K562 (cell line): ENCODE measurements at regions of chr5 and their contacts with region 1.

Region 1: GRCh38 chr5:34522599-34523386 is 133.3 kb upstream of the RAI14 start:
- DNase-seq: peak; percentile 77 to 88 (median 79)
- ATAC-seq: peak; percentile 88
- H3K4me3 ChIP-seq: no peak overlapping the region
- H3K27ac ChIP-seq: no peak overlapping the region; the same call in 2 of the 3 replicates
- H3K4me1 ChIP-seq: peaks cover 14 to 35% of the 10 kb centered on the region in 2 experiments; a peak in 3 of 5 replicates
- H3K27me3 ChIP-seq: no peaks in the 10 kb centered on the region
- CTCF ChIP-seq: peak; percentile 80 to 92 (median 84)
- EP300 ChIP-seq: no peak
- POLR2A ChIP-seq: no peak
- RAD21 ChIP-seq: peak; percentile 92 to 95

Region 2: DNA sequence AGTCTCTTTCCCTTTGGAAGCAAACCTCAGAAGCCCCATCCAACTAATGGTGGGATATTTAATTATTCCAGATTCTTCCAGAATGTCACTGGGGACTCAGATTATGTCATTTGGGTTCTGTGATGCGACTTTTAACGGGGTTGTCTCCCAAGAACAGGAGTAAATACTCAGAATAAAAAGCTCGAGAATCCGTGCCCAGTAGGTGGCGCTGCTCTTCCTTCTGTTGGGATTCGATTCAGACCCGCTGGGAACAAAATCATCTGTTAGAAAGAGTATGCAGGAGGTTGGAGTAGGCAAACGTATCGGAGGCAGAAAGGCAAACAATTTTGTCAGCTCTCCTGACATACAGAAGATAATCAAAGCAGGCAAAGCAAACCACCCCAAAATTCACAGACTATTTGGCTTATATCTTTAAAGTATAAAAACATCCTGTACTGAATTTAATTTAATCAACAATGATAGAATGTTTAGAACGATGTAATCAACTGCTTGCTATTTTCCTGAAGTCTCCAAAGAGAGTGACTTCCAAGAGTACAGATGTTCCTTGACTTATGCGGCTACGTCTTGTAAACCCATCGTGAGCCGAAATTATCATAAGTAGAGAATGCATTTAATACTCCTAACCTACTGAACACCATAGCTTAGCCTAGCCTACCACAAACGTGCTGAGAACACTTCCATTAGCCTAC is 36.5 kb before region 1 on chr5:
- CTCF ChIA-PET with region 1: interaction called, 4 read pairs
- POLR2A ChIA-PET with region 1: interaction called, 4 read pairs
- in situ Hi-C with region 1: no loop called
- intact Hi-C with region 1: loop called (anchors 1 kb)
- DNase-seq: peak; percentile 73 to 89 (median 76)
- ATAC-seq: peak; percentile 87
- H3K4me3 ChIP-seq: no peak overlapping the region
- H3K27ac ChIP-seq: no peak overlapping the region
- H3K4me1 ChIP-seq: peaks cover 0 to 5% of the 10 kb centered on the region in 2 experiments; a peak in 2 of 5 replicates
- H3K27me3 ChIP-seq: peaks cover 14 to 25% of the 10 kb centered on the region in 2 experiments
- CTCF ChIP-seq: peak; percentile 83 to 98 (median 89)
- EP300 ChIP-seq: 0 out of 2 replicates have a peak, but pooled peaks have one; percentile 17
- POLR2A ChIP-seq: no peak
- RAD21 ChIP-seq: peak; percentile 92 to 93

Region 3: DNA sequence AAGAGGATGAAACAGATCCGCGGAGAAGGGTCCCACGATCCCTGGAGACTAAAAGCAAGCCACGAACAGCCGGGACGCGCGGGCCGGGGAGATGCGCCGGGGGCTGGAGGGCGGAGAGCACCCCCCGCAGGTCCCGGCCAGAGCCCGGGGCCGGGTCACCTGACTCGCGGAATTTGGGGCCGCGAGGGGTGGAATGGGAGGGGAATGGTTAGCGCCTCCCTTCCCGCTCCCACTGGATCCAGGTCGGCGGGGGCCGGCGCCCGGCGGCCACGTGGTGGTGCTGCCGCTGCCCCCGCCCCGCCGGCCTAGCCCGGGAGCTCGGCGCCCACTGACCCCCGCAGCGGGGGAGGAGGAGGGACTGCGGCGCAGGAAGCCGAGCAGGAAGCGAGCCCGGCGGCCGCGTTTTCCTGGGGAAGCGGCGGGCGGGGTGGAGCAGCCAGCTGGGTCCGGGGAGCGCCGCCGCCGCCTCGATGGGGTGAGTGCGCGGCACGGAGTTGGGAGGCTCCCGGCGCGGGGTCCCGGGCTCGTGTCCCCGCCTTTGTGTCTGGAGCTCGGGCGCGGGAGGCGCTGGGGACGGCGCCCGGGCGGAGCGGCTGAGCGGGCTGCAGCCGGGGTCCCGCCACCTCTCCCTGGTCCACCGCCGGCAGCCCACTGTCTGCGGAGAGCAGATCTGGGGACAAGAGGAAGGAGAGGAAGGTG is 133.4 kb after region 1 on chr5 and contains the start of gene RAI14:
- CTCF ChIA-PET with region 1: interaction called, 4 read pairs
- POLR2A ChIA-PET with region 1: no interaction called
- in situ Hi-C with region 1: no loop called
- intact Hi-C with region 1: loop called (anchors 5 kb)
- DNase-seq: peak; percentile 86 to 98 (median 94)
- ATAC-seq: peak; percentile 87
- H3K4me3 ChIP-seq: peak within 1 kb of the TSS; percentile 75
- H3K27ac ChIP-seq: peak within 1 kb of the TSS; percentile 74
- H3K4me1 ChIP-seq: peaks cover 21% of the 10 kb centered on the region in 2 experiments; a peak in 4 of 5 replicates
- H3K27me3 ChIP-seq: no peaks in the 10 kb centered on the region
- CTCF ChIP-seq: peak in 1 of 3 experiments; percentile 26; a peak in 2 of 6 replicates
- EP300 ChIP-seq: no peak
- POLR2A ChIP-seq: peak; percentile 64
- RAD21 ChIP-seq: peak; percentile 58 to 61
- polyA plus RNA-seq, gene RAI14: 11.3 to 12.6 TPM

Region 4: DNA sequence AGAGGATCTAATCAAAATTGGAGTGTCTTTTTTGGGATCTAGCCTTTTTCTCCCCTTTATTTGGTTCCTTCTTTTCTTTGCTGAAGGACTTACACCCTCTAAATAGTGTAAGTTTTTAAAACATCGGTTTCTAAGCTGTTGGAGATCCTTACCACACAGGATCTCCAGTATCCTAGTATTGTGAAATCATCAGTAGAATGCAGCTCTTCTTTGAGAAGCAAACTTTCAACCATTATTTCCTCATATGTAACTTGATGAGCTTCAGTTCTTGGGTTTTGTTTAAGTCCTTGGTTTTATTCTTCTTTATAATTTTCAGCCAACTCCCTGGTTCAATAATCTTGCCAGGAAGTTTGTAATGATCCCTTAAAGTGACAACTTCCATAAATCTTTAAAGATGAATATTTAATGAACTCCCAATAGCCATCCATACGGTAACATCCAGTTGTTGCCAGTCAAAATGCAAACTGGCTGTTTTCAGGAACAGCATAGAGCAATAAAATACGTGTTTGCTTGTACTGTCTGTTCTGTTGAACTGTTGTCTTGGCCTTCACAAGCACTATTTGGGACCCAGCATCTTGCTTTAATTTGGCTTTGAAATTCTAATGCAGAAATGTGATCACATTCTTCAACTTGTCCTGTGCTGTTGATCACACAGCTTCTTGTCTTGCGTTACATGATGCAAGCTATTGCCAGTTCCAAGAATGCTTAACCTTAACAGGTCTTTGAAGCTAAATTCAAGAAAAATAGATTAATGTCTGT is 281.4 kb after region 1 on chr5:
- CTCF ChIA-PET with region 1: no interaction called
- POLR2A ChIA-PET with region 1: no interaction called
- in situ Hi-C with region 1: no loop called
- intact Hi-C with region 1: loop called (anchors 10 kb)
- DNase-seq: no peak
- ATAC-seq: no peak
- H3K4me3 ChIP-seq: no peak overlapping the region
- H3K27ac ChIP-seq: no peak overlapping the region
- H3K4me1 ChIP-seq: no peaks in the 10 kb centered on the region
- H3K27me3 ChIP-seq: no peaks in the 10 kb centered on the region
- CTCF ChIP-seq: no peak
- EP300 ChIP-seq: no peak
- POLR2A ChIP-seq: no peak
- RAD21 ChIP-seq: no peak

Region 5: DNA sequence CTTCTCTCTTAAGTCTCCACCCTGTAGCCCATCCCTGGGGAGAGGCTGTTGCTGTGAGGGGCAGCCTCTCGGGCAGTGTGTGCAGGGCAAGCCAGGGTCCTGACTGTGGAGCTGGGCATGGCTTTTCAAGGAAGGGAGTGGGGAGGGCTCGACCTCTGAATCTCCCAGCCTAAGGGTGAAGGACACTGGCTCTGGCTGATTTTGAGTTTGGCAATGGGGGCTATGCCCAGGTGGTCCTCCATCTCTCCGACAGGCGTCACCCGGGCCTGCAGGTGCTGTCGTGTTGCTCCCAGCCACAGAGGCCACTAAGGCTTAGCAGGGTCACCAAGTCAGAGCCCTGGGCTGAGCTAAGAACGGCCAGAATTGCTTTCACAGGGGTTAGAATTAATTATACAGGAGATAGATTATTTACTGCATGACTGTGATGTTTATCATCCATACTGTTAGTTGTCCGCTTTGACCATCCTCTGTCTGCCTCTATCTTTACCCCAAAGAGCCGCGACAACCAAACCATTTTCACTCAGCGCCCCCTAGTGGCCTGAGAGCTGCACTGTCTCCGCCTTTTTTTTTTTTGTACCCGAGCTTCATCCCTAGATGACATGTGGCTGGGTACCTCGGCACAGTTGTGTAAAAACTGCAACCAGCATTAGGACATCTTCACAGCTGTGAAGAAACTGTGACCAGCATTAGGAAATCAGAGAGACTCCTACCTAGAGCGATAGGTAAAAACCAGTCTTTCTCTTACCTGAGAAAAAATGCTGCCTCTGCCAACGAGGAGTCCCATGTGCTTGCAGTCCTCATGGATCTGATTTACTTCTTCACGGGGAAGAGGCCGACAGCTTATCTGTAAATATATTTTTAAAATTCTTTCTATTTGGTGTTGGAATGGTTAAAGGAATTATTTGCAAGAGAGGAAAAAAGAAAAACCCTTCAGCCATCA is 480.5 kb after region 1 on chr5:
- CTCF ChIA-PET with region 1: no interaction called
- POLR2A ChIA-PET with region 1: no interaction called
- in situ Hi-C with region 1: no loop called
- intact Hi-C with region 1: loop called (anchors 1 kb)
- DNase-seq: peak; percentile 78 to 82 (median 82)
- ATAC-seq: peak; percentile 96
- H3K4me3 ChIP-seq: no peak overlapping the region
- H3K27ac ChIP-seq: no peak overlapping the region
- H3K4me1 ChIP-seq: no peaks in the 10 kb centered on the region; a peak in 1 of 5 replicates
- H3K27me3 ChIP-seq: peaks cover 5 to 16% of the 10 kb centered on the region in 2 experiments; a peak in 3 of 5 replicates
- CTCF ChIP-seq: peak; percentile 85 to 96 (median 96)
- EP300 ChIP-seq: no peak
- POLR2A ChIP-seq: no peak
- RAD21 ChIP-seq: peak; percentile 66 to 77

Region 6: GRCh38 chr5:35117967-35118366 is 595.2 kb after region 1 on chr5:
- CTCF ChIA-PET with region 1: no interaction called
- POLR2A ChIA-PET with region 1: no interaction called
- in situ Hi-C with region 1: no loop called
- intact Hi-C with region 1: no loop called
- DNase-seq: no peak
- ATAC-seq: no peak
- H3K4me3 ChIP-seq: no peak overlapping the region
- H3K27ac ChIP-seq: no peak overlapping the region
- H3K4me1 ChIP-seq: no peaks in the 10 kb centered on the region
- H3K27me3 ChIP-seq: no peaks in the 10 kb centered on the region
- CTCF ChIP-seq: no peak
- EP300 ChIP-seq: no peak
- POLR2A ChIP-seq: no peak
- RAD21 ChIP-seq: no peak